Posterior cingulate gyrus (tissue), 11 donors: ENCODE measurements at regions of chr3 and their contacts with region 1.

Region 1: GRCh38 chr3:70531063-70531657 is 218.7 kb upstream of the MDFIC2 start:
- DNase-seq: no peak

Region 2: GRCh38 chr3:70832441-70833181 is 301.5 kb after region 1 on chr3:
- intact Hi-C with region 1: no loop called
- DNase-seq: no peak

Region 3: GRCh38 chr3:71652781-71653413 is 1121.7 kb after region 1 on chr3:
- intact Hi-C with region 1: loop called (anchors 5 kb)
- DNase-seq: peak in 6 of 10 donors; percentile 21 to 86 (median 48)